Common myeloid progenitor, CD34-positive (primary cell): ENCODE measurements at regions of chr10 and their contacts with region 1.

Region 1: DNA sequence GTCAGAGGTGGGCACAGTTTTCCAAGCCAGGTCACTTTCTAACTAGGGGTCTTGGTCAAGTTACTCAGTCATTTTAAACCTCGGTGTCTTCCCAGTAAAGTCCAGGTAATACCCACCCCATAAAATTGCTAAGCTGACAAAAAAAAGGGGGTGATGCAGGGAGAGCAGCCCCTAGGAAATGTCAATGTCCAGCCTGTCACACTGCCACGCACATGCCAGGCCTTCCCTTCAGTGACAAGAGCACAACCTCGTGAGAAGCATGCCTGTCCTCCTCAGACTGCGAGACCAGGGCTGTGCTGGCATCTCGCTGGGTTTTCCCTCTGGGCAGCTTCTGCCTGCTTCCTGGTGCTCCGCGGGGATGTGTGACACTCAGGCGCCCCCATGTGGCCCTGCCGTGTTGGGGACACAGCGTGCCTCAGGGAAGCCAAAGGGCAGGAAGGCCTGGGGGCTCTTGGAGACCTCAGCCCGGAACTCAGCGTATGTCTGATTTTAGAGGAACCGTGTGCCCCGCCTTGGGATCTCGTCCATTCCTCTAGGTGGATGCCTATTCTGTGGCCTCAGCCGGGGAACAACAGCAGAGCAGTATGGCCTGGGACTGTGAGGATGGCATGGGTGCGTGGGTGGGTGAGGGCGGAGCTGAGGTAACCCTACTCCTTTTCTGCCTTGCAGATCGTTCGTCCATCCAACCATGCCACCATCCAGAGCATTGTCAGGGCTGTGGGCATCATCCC is 10.2 kb upstream of the GDF2 start:
- DNase-seq: peak; percentile 77 to 85 (median 83)
- H3K4me3 ChIP-seq: no peak overlapping the region
- H3K27ac ChIP-seq: no peak overlapping the region
- H3K4me1 ChIP-seq: peaks cover 0 to 13% (median 3%) of the 10 kb centered on the region in 4 experiments
- H3K27me3 ChIP-seq: peaks cover 0 to 5% (median 0%) of the 10 kb centered on the region in 5 experiments

Region 2: DNA sequence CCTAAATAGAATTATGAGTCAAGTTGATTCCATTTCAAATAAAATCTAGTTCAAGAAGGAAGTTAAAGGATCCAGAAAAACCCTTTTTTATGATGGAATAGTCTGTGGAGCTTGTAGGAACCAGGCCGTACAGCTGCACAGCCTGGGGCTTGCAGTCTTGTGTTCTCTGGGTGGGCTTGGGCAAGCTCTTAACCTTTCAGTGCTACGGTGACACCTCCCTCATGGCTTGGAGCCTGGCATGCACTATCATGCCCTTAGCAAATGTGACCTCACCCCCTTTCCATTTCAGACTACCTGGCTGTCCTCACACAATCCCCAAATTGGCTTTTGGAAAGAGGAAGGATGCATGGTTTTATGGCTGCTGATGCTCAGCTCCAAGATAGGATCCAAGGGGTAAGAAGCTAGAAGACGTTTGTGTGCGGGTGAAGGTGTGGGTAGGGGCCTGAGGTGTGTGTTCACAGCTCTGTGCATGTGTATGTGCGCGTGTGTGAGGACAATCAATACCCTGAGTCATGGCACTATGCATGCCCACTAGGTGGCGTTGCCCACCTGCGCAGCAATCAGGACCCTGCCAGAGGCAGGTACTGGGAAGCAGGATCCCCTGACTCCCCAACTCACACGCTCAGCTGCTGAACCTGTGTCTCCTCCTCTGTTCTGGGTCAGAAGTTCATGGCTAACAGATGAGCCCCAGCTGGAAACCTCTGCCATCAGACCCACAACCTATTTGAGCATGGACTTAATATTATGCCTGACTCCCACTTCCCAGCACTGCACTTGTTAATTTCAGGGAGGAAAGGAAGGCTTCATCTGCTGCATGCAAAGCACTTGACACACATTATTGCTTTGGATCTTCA is 287.5 kb before region 1 on chr10:
- CTCF ChIA-PET with region 1: interaction called, 69 read pairs
- POLR2A ChIA-PET with region 1: no interaction called
- DNase-seq: peak; percentile 68 to 77 (median 70)
- H3K4me3 ChIP-seq: no peak overlapping the region
- H3K27ac ChIP-seq: no peak overlapping the region
- H3K4me1 ChIP-seq: peaks cover 0 to 5% (median 1%) of the 10 kb centered on the region in 4 experiments
- H3K27me3 ChIP-seq: peaks cover 0 to 2% (median 0%) of the 10 kb centered on the region in 5 experiments

Region 3: DNA sequence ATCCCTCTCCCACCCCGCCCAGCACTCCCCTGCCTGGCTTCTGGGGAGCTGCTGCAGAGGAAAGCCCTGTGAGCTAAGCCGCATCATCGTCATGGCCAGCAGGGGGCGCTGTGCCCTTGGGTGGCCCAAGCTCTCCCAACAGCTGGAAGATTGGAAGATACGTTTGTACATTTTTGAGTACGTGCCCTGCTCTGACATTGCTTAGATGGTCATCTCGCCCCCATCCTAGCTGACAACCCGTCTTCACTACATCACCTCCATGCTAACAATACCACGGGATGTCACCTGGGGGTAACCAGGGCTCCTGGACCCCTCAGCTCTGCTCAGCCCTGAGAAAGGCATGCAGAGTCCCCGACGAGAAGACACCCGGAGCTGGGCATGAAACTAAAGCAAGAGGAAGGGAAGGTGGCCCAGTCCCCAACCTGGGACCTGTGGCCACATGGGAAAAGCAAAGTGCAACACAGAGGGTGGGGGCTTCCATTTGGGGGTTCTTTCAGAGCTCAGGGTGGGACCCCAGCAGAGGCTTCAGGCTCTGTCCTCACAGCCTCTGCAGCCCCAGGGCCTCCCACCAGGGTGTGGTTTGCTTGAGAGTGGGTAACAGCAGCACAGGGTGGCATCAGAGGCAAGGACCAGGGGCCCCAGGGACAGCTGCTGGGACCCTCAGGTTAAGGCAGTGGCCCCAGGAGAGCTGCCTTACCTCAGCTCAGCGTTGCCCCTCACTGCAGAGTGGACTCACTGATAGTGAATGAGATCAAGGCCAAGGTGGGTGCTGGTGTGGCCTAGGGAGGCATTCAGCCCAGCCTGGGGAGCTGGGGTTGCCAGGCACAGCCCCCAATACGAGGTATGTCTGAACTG is 264.2 kb before region 1 on chr10:
- CTCF ChIA-PET with region 1: interaction called, 183 read pairs
- POLR2A ChIA-PET with region 1: interaction called, 3 read pairs
- DNase-seq: peak; percentile 70 to 81 (median 75)
- H3K4me3 ChIP-seq: no peak overlapping the region
- H3K27ac ChIP-seq: no peak overlapping the region
- H3K4me1 ChIP-seq: peaks cover 0 to 12% (median 9%) of the 10 kb centered on the region in 4 experiments
- H3K27me3 ChIP-seq: no peaks in the 10 kb centered on the region

Region 4: DNA sequence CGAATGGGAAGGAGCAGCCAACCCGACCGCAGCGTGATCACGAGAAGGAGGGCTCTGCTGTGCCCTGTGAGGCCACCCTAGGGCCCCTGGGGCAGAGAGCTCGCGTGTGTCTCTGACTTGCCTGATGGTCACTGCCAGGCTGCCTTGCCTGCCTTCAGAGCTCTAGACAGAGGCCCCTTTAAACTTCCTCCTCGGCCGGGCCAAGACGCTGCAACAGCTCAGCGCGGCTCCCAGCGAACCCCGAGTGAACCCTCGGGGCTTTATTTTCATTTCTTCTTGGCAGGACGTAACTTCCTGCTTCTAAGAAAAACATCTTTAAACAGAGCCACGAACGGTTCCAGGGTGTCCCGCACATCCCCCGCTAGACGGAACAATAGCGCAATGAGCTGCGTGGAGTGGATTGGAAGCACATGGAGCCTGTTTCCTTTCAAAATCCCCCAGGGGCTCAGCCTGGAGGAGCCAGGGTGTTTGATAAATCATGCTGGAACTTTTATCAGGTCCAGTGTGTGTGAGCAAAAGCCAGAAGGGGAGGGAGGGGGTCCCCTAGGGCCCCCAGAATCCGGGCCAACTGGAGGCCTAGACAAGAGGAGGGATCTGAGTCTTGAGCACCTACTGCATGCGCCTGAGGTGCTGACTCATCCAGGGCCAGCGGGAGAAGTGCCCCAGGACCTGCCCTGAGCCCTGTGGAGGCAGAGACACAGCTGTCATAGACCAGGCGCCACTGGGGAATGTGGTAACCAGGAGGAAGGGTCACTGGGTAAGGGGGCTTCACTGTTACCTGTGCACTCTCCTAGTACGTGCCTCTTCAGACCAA is 146.2 kb before region 1 on chr10:
- CTCF ChIA-PET with region 1: interaction called, 13 read pairs
- POLR2A ChIA-PET with region 1: no interaction called
- DNase-seq: peak; percentile 58 to 88 (median 85)
- H3K4me3 ChIP-seq: peak overlapping the region in 6 of 7 experiments; percentile 37 to 76 (median 47)
- H3K27ac ChIP-seq: peak overlapping the region; percentile 15 to 73
- H3K4me1 ChIP-seq: peaks cover 0 to 19% (median 17%) of the 10 kb centered on the region in 4 experiments
- H3K27me3 ChIP-seq: no peaks in the 10 kb centered on the region

Region 5: GRCh38 chr10:47322300-47323061 is 10.4 kb after region 1 on chr10 and contains the start of gene GDF2:
- CTCF ChIA-PET with region 1: interaction called, 12 read pairs
- POLR2A ChIA-PET with region 1: no interaction called
- DNase-seq: peak in 2 of 3 donors; percentile 5 to 37
- H3K4me3 ChIP-seq: no peak within 1 kb of the TSS
- H3K27ac ChIP-seq: no peak within 1 kb of the TSS
- H3K4me1 ChIP-seq: no peaks in the 10 kb centered on the region
- H3K27me3 ChIP-seq: peaks cover 0 to 6% (median 0%) of the 10 kb centered on the region in 5 experiments